ENCODE measurements at regions of chr3 and their contacts with region 1.

Region 1: GRCh38 chr3:177359593-177360357 is 162.5 kb upstream of the TBL1XR1 start:
- DNase-seq: peak; percentile 69
- H3K4me3 ChIP-seq: peak overlapping the region; percentile 18 to 65 (median 41)
- H3K27ac ChIP-seq: peak overlapping the region; percentile 86 to 96 (median 94)
- H3K4me1 ChIP-seq: peaks cover 32 to 78% (median 52%) of the 10 kb centered on the region in 3 donors
- H3K27me3 ChIP-seq: no peaks in the 10 kb centered on the region
- CTCF ChIP-seq: peak in 2 of 6 experiments; percentile 21 to 22
- POLR2A ChIP-seq: peak in 2 of 4 donors; percentile 54 to 60

Region 2: DNA sequence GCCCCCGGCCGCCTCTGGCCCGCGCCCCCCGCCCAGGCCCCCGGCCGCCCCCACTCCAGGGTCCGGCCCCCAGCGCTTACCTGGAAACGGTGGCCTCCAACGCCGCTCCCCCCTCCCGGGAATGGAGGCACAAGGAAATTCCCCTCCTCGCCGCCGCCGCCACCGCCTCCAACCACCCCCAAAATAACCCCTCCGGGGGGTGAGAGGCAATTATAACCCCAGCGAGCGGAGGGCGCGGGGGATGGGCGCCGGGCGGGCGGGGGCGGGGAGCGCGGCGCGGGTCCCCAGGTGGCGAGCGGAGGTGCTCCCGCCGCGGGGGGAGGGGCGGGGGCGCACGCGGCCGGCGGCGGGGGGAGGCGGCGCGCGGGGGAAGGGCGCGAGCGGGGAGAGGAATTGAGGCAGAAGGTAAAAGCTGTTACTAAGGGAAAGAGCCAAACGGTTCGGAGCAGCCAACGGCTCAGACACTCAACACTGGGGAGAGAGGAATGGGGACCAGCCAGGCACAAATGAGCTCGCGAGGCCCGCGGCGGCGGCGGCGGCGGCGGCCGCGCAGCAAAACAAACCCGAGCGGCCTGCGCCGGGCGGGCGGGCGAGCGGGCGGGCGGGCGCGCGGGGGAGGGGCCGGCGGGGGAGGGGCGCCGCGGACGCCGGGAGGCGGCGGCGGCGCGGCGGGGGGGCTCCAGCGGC is 162.6 kb before region 1 on chr3 and contains the start of gene TBL1XR1:
- intact Hi-C with region 1: loop called (anchors 2 kb)
- DNase-seq: peak; percentile 51
- H3K4me3 ChIP-seq: peak within 1 kb of the TSS; percentile 93 to 99 (median 98)
- H3K27ac ChIP-seq: peak within 1 kb of the TSS; percentile 97 to 100 (median 100)
- H3K4me1 ChIP-seq: peaks cover 13 to 76% (median 23%) of the 10 kb centered on the region in 3 donors
- H3K27me3 ChIP-seq: no peaks in the 10 kb centered on the region
- CTCF ChIP-seq: no peak
- POLR2A ChIP-seq: no peak
- total RNA-seq, gene TBL1XR1: 66.0 to 79.8 (median 72.4) TPM